Right cardiac atrium (tissue), 5 donors: ENCODE measurements at regions of chr9 and their contacts with region 1.

Region 1: DNA sequence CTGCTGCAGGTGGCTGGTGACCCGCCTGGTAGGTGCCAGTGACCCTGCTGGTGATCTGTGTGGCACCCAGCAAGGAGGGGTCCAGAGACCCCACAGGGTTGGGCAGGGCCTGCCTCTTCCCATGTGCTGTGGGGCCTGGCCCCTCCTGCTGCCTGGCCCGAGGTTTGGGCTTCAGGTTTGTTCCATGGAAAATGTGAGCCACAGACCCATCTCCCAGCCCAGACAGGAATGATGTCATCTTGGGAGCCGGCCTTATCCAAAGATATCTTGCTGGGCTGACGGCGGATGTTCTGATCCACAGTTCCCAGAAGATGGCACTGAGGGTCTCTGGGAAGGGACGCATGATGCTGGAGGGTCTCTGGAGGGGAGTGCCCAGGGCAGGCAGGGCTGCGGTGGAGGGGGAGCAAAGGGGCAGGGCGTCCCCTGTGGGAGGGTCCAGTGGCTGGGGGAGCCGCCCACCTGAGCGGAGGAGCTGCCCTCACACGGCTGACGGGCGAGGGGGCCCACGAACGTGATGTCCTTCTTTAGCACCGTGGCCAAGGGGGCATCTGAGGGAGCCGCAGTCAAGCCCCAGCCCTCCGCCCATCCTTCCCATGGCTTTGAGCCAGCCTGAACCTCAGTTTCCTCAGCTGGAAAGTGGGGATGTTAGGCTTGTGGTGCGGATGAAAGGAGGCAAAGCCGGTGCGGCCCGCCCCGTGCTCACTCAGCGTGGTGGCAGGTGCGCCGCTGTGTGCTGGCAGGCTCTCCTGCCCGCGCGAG is 68.1 kb downstream of the COL5A1 start:
- DNase-seq: peak; percentile 74 to 83 (median 79)
- ATAC-seq: peak; percentile 20 to 70
- H3K4me3 ChIP-seq: no peak overlapping the region
- H3K27ac ChIP-seq: no peak overlapping the region
- H3K4me1 ChIP-seq: peaks cover 5% of the 10 kb centered on the region
- H3K27me3 ChIP-seq: no peaks in the 10 kb centered on the region

Region 2: DNA sequence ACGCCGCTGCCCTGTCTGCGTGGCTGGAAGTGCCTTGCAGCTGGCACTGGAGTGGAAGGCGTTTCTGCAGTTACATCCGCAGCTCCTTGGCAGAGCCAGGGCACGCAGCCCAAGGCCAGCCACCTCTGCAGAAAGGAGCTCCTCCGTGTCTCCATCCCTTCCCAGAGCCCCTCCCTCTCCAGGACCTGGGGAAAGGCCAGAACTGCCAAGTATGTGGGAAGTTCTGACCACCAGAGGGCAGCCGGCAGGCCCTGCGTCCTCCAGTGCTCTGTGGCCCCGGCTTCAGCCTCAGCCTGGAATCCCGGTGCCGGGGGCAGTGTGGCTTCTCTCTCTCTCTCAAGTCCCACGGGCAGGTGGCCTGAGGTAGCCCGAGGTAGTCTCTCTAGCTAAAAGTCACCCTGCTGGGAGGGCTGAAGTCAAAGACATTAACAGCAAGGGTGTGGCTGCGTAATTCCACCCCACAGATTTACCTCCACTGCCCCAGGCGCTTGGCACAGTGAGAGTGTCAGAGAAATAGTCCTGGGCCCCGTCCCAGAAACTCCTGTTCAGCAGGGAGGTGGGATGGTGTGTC is 69.2 kb after region 1 on chr9:
- intact Hi-C with region 1: loop called in 1 of 4 experiments (anchors 10 kb)
- DNase-seq: peak; percentile 57 to 89 (median 86)
- ATAC-seq: peak; percentile 63 to 80
- H3K4me3 ChIP-seq: no peak overlapping the region
- H3K27ac ChIP-seq: no peak overlapping the region
- H3K4me1 ChIP-seq: peaks cover 4% of the 10 kb centered on the region
- H3K27me3 ChIP-seq: no peaks in the 10 kb centered on the region